ENCODE measurements at regions of chr3 and their contacts with region 1.

Region 1: DNA sequence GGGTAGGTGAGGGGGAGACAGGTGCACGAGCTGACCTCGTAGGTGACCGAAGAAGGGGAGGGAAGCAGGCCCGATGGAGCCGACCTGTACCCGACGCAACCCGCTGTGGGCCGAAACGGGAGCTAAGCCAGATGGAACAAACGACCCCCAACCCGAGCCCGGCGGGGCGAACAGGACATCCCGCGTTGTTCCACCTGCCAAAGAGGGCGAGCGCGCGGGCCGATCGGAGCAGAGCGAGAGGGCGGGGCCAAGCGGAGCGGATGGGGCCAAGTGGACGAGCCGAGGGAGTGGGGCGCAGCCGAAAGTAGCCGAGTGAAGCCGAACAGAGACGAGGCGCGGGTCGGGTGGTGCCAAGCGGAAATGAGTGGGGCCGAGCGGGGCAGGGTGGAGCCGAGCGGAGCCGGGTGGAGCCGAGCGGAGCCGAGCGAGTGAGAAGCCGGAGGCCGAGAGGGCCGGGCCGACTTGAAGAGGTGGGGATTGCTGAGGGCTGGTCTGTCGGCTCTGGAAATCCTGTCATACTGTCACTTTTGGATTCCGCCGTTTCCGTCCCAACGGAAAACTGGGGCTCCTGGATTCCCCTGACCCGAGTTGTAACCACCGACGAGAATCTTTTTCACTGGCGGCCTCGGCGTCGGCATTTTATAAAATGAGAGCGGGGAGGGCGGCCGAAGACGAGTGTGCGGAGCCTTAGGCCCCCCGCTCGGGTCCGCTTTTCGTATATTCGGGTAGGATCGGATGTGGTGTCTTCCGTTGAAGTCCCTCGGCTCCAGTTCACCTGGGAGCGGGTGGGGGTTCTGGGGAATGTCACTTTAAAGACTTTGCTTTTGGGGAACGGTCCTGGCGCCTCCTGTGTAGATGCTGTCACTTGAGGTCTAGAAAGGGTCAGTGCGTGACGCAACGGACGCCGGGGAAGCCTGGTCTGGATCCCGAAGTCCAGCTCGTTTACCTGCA is 15.6 kb upstream of the WNT7A start:
- DNase-seq: peak; percentile 96
- H3K4me3 ChIP-seq: peak overlapping the region; percentile 39 to 61 (median 48)
- H3K27ac ChIP-seq: peak overlapping the region; percentile 42 to 76 (median 62)
- H3K4me1 ChIP-seq: peaks cover 4 to 18% (median 9%) of the 10 kb centered on the region in 4 donors
- H3K27me3 ChIP-seq: no peaks in the 10 kb centered on the region
- CTCF ChIP-seq: no peak
- EP300 ChIP-seq: no peak
- POLR2A ChIP-seq: peak; percentile 70

Region 2: GRCh38 chr3:13648060-13649001 is 247.1 kb before region 1 on chr3:
- in situ Hi-C with region 1: loop called in 2 of 4 experiments (anchors 25 kb)
- intact Hi-C with region 1: no loop called
- DNase-seq: peak; percentile 79
- H3K4me3 ChIP-seq: no peak overlapping the region
- H3K27ac ChIP-seq: no peak overlapping the region
- H3K4me1 ChIP-seq: peaks cover 0 to 13% (median 1%) of the 10 kb centered on the region in 4 donors
- H3K27me3 ChIP-seq: peaks cover 10% of the 10 kb centered on the region
- CTCF ChIP-seq: peak; percentile 80 to 96 (median 94)
- EP300 ChIP-seq: no peak
- POLR2A ChIP-seq: no peak

Region 3: GRCh38 chr3:13727890-13728289 is 167.5 kb before region 1 on chr3:
- in situ Hi-C with region 1: no loop called
- intact Hi-C with region 1: no loop called
- DNase-seq: no peak
- H3K4me3 ChIP-seq: no peak overlapping the region
- H3K27ac ChIP-seq: no peak overlapping the region
- H3K4me1 ChIP-seq: no peaks in the 10 kb centered on the region
- H3K27me3 ChIP-seq: peaks cover 11% of the 10 kb centered on the region
- CTCF ChIP-seq: no peak
- EP300 ChIP-seq: no peak
- POLR2A ChIP-seq: no peak

Region 4: GRCh38 chr3:13770170-13771169 is 125.0 kb before region 1 on chr3:
- in situ Hi-C with region 1: no loop called
- intact Hi-C with region 1: no loop called
- DNase-seq: no peak
- H3K4me3 ChIP-seq: no peak overlapping the region
- H3K27ac ChIP-seq: no peak overlapping the region
- H3K4me1 ChIP-seq: no peaks in the 10 kb centered on the region
- H3K27me3 ChIP-seq: no peaks in the 10 kb centered on the region
- CTCF ChIP-seq: no peak
- EP300 ChIP-seq: no peak
- POLR2A ChIP-seq: no peak

Region 5: GRCh38 chr3:13850158-13850945 is 45.1 kb before region 1 on chr3:
- in situ Hi-C with region 1: no loop called
- intact Hi-C with region 1: no loop called
- DNase-seq: no peak
- H3K4me3 ChIP-seq: no peak overlapping the region
- H3K27ac ChIP-seq: no peak overlapping the region
- H3K4me1 ChIP-seq: no peaks in the 10 kb centered on the region
- H3K27me3 ChIP-seq: no peaks in the 10 kb centered on the region
- CTCF ChIP-seq: no peak
- EP300 ChIP-seq: no peak
- POLR2A ChIP-seq: no peak

Region 6: DNA sequence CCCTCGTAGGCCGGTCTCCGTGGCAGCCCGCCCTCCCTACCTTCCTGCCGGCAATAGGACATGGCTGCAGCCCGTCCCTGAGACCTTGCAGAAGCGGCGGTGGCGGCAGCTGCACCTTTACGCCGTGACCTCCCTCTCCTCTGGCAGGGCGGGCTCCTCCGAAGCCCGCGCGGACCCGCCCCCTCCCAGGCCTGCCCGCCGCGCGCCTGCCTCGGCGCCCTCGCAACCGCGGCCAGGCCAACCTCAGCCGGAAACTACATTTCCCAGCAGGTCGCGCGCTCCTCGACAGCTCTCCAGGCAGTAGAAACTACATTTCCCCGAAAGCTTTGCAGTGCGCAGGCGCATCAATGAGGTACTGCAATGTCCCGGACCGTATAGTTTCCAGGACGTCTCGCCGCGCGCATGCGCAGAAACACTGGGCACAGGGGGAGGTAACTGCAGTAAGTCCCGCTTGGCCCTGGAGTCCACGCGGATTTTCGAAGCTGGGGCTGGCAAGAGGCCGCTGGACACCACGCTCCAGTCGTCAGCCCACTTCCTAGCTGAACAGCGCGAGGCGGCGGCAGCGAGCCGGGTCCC is 229.3 kb after region 1 on chr3 and contains the starts of genes CHCHD4 and TMEM43:
- in situ Hi-C with region 1: loop called in 2 of 4 experiments (anchors 10 kb)
- intact Hi-C with region 1: no loop called
- DNase-seq: peak; percentile 99
- H3K4me3 ChIP-seq: peak within 1 kb of the TSS; percentile 60 to 88 (median 78)
- H3K27ac ChIP-seq: peak within 1 kb of the TSS; percentile 90 to 97 (median 96)
- H3K4me1 ChIP-seq: peaks cover 16 to 33% (median 29%) of the 10 kb centered on the region in 4 donors
- H3K27me3 ChIP-seq: no peaks in the 10 kb centered on the region
- CTCF ChIP-seq: peak in 1 of 5 experiments; percentile 20
- EP300 ChIP-seq: no peak
- POLR2A ChIP-seq: peak; percentile 84
- total RNA-seq, gene CHCHD4: 0.80 to 22.1 (median 13.5) TPM
- total RNA-seq, gene TMEM43: 30.8 to 128 (median 48.5) TPM

Region 7: DNA sequence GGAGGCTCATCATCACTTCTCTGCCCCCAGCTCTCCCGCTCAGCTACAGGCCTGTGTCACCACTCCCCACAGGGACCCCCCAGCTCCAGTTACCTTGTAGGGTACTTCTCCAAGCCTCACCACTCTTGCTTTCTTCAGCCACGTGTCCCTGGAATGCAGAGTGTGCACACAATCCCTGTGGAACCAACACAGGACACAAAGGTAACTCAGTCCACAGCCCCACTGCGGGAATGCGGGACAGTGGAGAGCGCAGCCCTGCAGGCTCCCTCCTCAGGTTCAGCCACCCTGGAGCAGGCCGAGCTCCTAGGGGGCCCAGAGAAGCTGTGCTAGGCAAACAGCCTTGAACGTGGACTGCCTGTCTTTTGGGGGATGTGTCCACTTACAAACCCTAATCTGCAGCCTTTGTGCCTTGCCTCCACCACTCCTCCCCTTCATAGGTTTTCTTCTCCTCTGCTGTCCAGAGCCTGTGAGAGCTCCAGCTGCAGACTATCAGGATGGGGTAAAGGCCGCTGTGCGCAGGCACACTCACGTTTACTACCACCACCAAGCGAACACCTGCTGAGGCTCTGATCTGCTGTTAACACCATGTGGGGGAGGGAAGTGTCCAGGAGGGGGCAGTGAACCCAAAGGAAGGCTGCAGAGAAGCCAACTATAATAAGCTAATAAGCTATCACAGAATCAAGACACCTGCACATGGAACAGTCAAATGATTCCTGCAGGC is 257.0 kb after region 1 on chr3:
- in situ Hi-C with region 1: loop called in 1 of 4 experiments (anchors 25 kb)
- intact Hi-C with region 1: no loop called
- DNase-seq: no peak
- H3K4me3 ChIP-seq: no peak overlapping the region
- H3K27ac ChIP-seq: no peak overlapping the region
- H3K4me1 ChIP-seq: no peaks in the 10 kb centered on the region
- H3K27me3 ChIP-seq: no peaks in the 10 kb centered on the region
- CTCF ChIP-seq: peak in 1 of 5 experiments; percentile 8
- EP300 ChIP-seq: no peak
- POLR2A ChIP-seq: no peak

Region 8: GRCh38 chr3:14188041-14188754 is 292.8 kb after region 1 on chr3:
- in situ Hi-C with region 1: loop called in 1 of 4 experiments (anchors 10 kb)
- intact Hi-C with region 1: no loop called
- DNase-seq: no peak
- H3K4me3 ChIP-seq: no peak overlapping the region
- H3K27ac ChIP-seq: no peak overlapping the region
- H3K4me1 ChIP-seq: no peaks in the 10 kb centered on the region
- H3K27me3 ChIP-seq: no peaks in the 10 kb centered on the region
- CTCF ChIP-seq: no peak
- EP300 ChIP-seq: no peak
- POLR2A ChIP-seq: no peak

Region 9: DNA sequence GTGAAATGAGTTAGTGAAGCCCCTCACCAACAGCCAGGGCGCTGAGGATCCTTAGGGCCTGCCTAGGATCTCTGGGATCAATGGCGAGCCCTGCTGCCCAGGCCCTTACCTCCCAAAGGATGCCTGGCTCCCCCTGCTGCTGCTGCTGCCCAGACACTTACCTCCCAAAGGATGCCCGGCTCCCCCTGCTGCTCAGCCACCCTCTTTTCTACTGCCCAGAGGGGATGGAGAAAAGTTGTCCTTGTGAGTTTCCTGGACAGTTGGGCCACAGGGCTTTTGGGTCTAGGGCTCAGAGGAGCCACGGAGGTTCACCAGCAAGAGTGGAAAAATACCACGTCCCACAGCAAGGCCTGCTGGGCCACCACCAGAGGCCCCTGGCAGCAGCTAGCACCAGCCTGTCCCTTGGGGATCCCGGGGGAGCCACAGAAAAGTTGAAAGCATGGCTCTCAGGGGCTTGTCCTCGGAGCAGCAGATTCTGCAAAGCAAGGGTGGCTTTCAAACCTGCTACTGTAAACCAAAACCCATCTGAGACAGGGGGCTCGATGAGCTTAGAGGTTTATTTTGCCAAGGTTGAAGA is 566.4 kb after region 1 on chr3:
- in situ Hi-C with region 1: loop called in 2 of 4 experiments (anchors 10 to 25 kb)
- intact Hi-C with region 1: loop called (anchors 5 kb)
- DNase-seq: peak; percentile 72
- H3K4me3 ChIP-seq: no peak overlapping the region
- H3K27ac ChIP-seq: no peak overlapping the region
- H3K4me1 ChIP-seq: peaks cover 0 to 8% (median 4%) of the 10 kb centered on the region in 4 donors
- H3K27me3 ChIP-seq: no peaks in the 10 kb centered on the region
- CTCF ChIP-seq: peak; percentile 42 to 82 (median 57)
- EP300 ChIP-seq: no peak
- POLR2A ChIP-seq: no peak